ENCODE measurements at regions of chr20 and their contacts with region 1.

Region 1: GRCh38 chr20:45771182-45771759 is 20.4 kb downstream of the WFDC3 start:
- DNase-seq: peak; percentile 66 to 92 (median 88)
- ATAC-seq: peak; percentile 93 to 99 (median 97)
- H3K4me3 ChIP-seq: no peak overlapping the region
- H3K27ac ChIP-seq: no peak overlapping the region
- H3K4me1 ChIP-seq: peaks cover 0 to 8% (median 0%) of the 10 kb centered on the region in 3 donors
- H3K27me3 ChIP-seq: no peaks in the 10 kb centered on the region
- CTCF ChIP-seq: peak; percentile 84 to 94 (median 90)

Region 2: DNA sequence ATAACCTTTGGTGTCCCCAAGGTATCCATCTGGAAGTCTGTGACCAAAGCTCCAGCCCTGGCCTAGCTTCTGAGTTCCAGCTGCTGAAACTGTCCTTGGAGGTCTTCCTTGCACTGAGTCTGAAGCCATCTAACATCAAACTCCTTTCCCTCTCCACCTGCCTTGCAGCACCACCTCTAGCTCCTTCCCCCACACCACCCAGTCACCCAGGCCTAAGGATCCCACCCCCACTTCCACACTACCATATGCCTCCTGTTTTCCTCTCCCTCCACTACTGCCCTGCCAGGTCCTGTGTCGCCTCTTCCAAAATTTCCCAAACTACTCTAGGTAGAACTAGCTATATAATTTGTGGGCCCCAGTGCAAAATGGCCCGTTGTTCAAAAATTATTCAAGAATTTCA is 452.3 kb before region 1 on chr20:
- intact Hi-C with region 1: loop called in 2 of 3 experiments (anchors 5 to 10 kb)
- DNase-seq: no peak
- ATAC-seq: peak in 3 of 4 donors; percentile 1 to 16 (median 4)
- H3K4me3 ChIP-seq: no peak overlapping the region
- H3K27ac ChIP-seq: peak overlapping the region in 2 of 4 donors; percentile 6 to 31
- H3K4me1 ChIP-seq: peaks cover 0 to 11% (median 0%) of the 10 kb centered on the region in 3 donors
- H3K27me3 ChIP-seq: no peaks in the 10 kb centered on the region
- CTCF ChIP-seq: no peak

Region 3: DNA sequence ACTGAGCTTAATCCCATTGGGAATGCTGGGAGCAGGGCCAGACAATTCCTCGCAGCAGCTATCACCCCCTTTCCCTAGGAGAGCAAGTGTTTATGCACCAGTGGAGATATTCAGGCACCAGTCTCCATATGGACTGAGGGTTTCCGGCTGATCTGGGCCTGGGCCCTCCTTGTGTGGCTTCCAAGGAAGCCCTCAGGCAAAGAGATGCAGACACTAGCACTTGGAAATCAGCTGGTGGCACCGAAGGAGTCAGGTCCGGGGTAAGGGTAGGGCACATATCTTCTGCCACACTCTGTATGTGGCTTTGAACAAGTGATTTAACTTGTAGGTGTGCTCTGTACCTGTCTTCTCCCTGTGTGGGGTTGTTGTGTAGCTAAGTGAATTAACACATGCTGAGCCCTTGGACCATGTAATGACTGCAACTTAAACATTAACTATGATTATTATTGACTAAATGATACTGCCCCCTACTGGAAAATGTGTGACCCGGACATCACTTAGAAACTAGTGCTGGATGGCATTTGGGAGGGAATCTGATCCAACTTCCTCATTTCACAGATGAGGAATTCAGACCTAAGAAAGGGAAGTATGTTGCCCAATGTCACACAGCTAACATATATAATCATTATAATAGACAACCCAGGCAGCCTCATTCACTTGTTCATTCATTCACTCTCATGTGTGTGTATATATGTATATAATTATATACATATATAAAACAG is 321.0 kb before region 1 on chr20:
- intact Hi-C with region 1: loop called in 1 of 3 experiments (anchors 10 kb)
- DNase-seq: no peak
- ATAC-seq: peak; percentile 31 to 90 (median 82)
- H3K4me3 ChIP-seq: no peak overlapping the region
- H3K27ac ChIP-seq: no peak overlapping the region
- H3K4me1 ChIP-seq: no peaks in the 10 kb centered on the region
- H3K27me3 ChIP-seq: no peaks in the 10 kb centered on the region
- CTCF ChIP-seq: peak; percentile 38 to 56 (median 49)

Region 4: DNA sequence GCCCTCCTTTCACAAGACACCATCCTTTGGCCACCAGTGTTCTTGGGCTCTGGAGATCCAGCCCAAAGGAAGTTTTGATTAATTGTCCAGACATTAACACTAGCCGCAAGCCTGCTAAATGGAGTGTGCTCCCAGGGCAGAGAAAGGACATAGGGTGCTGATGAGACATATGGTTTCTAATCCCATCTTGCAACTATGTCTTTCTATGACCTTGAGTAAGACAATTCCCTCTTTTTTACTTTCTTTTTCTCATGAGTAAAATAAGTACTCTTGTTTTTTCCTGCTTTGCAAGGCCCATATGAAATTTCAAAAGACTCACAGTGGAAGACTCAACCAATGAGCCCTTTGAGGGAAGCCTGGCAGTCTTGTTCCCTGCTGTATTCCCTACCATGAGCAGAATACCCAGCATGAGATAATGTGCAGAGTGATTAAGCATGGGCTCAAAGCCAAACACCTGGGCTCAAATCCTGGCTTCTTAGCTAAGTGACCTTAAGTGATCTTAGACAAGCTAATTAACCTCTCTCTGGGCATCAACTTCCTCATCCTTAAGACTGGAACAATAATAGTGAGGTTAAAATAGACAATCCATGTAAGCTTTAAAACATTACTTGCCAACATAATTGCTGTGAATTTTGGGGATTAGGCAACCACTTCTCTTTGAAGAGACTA is 66.2 kb before region 1 on chr20 and contains the start of gene WFDC10B:
- intact Hi-C with region 1: no loop called
- DNase-seq: no peak
- ATAC-seq: no peak
- H3K4me3 ChIP-seq: no peak within 1 kb of the TSS
- H3K27ac ChIP-seq: no peak within 1 kb of the TSS
- H3K4me1 ChIP-seq: no peaks in the 10 kb centered on the region
- H3K27me3 ChIP-seq: no peaks in the 10 kb centered on the region
- CTCF ChIP-seq: no peak
- total RNA-seq, gene WFDC10B: not detected

Region 5: GRCh38 chr20:45867819-45868176 is 96.5 kb after region 1 on chr20:
- intact Hi-C with region 1: no loop called
- DNase-seq: no peak
- ATAC-seq: no peak
- H3K4me3 ChIP-seq: no peak overlapping the region
- H3K27ac ChIP-seq: no peak overlapping the region
- H3K4me1 ChIP-seq: no peaks in the 10 kb centered on the region
- H3K27me3 ChIP-seq: no peaks in the 10 kb centered on the region
- CTCF ChIP-seq: no peak